ENCODE measurements at regions of chr16 and their contacts with region 1.

Region 1: DNA sequence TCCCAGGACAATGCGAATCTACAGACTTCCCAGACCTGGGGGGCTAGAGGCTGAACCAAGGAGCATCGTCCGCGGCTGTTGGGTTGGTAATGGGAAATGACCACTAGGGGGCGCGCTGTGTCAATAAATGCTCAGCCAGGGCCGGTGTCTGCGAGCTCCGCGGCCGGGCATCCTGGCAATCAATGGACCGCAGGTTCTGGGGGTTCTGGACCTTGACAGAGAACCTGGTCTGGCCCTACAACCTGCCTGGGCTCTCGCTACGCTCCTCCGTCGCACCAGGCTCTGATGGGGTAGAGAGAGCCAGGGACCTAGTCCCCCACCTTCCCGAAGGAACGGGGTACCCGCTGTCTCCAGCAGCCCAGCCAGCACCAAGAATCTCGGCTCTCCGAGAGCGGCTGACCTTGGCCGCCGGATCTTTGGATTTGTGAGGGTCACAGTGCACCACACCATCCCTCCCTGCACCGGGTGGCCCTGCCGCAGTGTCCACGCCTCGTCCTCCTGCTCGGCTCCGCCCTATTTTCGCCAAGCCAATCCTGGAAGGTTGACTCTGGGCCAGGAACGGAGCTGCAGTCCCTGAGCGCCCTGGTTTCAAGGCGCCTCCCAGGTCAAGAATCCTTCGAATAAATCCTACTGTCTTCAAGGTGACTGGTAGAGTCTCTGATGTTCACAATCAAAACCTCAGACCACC is 20.4 kb upstream of the BEAN1 start:
- ATAC-seq: peak; percentile 66 to 95 (median 92)
- H3K4me3 ChIP-seq: peak overlapping the region; percentile 41 to 77 (median 70)
- H3K27ac ChIP-seq: peak overlapping the region in 1 of 2 donors; percentile 26
- H3K4me1 ChIP-seq: peaks cover 0 to 6% of the 10 kb centered on the region in 2 donors

Region 2: DNA sequence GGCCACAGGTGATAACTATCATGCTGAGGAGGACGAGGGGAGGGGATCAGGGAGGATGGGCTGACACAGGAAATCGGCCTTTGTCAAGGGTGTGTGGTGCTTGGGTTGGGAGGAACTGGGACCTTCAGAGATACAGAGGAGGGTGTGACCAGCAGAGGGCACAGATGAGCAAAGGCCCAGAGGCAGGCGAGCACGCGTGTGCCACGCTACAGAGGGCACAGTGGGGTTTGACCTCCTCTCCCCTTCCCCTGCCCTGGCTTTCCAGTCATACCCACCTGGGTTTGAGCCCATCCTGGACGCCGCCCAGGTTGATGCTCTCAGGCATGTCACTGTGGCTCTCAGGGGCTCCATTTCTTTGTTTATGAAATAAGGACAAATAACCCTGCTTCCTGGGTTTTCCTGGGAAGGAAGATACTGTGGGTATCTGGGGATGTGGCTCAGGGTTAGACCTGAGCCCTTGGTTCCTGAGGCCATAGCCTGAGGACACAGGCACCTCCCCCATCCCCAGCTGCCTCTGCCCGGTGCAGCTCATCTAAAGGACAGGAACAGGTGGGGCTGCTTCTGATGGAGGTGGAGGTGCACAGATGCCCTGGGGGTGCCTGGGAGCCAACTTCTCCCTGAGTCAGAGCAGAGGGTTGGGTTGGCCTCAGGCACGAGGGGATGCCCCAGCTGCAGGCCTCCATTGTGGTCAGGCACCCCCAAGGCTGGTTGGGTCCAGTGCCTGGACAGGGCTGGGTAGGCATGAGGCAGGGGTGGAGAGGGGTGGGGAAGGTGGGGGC is 72.2 kb after region 1 on chr16:
- in situ Hi-C with region 1: loop called in 1 of 9 experiments (anchors 10 kb)
- ATAC-seq: peak in 4 of 8 experiments; percentile 19 to 88 (median 80)
- H3K4me3 ChIP-seq: no peak overlapping the region
- H3K27ac ChIP-seq: no peak overlapping the region
- H3K4me1 ChIP-seq: no peaks in the 10 kb centered on the region

Region 3: DNA sequence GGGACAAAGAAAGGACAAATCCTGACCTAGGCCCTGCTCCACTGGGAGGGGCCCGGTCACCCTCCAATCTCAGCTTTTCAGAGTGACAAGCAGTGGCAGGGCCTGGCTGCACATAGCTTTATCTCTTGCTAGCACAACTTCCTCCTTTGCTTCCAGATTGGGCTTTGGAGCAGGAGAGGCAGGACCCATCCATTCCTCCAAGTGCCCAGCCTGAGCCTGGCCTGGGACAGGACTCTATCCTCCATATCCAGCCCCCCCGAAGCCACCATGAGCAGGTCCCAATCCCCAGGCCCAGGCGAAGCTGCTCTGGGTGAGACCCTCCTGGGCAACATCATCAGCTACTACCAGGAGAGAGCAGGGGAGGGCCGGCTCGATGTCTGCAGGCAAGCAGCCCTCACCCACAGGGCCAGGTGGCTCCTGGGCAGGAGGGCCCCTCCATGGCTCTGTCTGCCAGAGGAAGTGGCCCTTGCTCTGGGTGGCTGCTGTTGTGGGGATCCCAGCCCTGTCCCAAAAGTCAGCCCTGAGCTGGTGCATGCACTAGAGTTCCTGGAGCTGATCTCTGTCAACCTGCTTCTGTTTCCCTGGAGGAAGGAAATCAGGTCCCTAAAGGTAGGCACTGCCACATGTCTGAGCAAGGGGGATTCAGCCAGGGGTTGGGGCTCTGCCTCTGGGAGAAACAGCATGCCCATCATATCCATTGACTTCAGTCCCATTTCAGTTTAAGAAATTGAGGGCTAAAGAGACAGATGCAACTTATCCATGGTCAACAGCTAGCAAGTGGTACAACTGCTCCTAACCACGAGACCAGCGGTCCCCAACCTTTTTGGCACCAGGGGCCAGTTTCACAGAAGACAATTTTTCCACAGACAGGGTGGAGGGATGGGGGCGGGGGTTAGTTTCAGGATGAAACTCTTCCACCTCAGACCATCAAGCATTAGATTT is 84.4 kb after region 1 on chr16:
- in situ Hi-C with region 1: loop called in 1 of 9 experiments (anchors 10 kb)
- ATAC-seq: no peak
- H3K4me3 ChIP-seq: no peak overlapping the region
- H3K27ac ChIP-seq: no peak overlapping the region
- H3K4me1 ChIP-seq: peaks cover 0 to 4% of the 10 kb centered on the region in 2 donors

Region 4: GRCh38 chr16:66552286-66553177 is 145.9 kb after region 1 on chr16 and contains the start of gene CKLF:
- in situ Hi-C with region 1: loop called in 1 of 9 experiments (anchors 25 kb)
- ATAC-seq: peak; percentile 53 to 82 (median 76)
- H3K4me3 ChIP-seq: peak within 1 kb of the TSS; percentile 43 to 52 (median 49)
- H3K27ac ChIP-seq: peak within 1 kb of the TSS; percentile 79 to 84
- H3K4me1 ChIP-seq: peaks cover 22 to 24% of the 10 kb centered on the region in 2 donors
- total RNA-seq, gene CKLF: 33.8 to 69.7 (median 54.0) TPM

Region 5: GRCh38 chr16:66588981-66589713 is 182.5 kb after region 1 on chr16:
- in situ Hi-C with region 1: loop called in 2 of 9 experiments (anchors 25 kb)
- ATAC-seq: peak in 3 of 8 experiments; percentile 62 to 83 (median 68)
- H3K4me3 ChIP-seq: no peak overlapping the region
- H3K27ac ChIP-seq: no peak overlapping the region
- H3K4me1 ChIP-seq: no peaks in the 10 kb centered on the region

Region 6: DNA sequence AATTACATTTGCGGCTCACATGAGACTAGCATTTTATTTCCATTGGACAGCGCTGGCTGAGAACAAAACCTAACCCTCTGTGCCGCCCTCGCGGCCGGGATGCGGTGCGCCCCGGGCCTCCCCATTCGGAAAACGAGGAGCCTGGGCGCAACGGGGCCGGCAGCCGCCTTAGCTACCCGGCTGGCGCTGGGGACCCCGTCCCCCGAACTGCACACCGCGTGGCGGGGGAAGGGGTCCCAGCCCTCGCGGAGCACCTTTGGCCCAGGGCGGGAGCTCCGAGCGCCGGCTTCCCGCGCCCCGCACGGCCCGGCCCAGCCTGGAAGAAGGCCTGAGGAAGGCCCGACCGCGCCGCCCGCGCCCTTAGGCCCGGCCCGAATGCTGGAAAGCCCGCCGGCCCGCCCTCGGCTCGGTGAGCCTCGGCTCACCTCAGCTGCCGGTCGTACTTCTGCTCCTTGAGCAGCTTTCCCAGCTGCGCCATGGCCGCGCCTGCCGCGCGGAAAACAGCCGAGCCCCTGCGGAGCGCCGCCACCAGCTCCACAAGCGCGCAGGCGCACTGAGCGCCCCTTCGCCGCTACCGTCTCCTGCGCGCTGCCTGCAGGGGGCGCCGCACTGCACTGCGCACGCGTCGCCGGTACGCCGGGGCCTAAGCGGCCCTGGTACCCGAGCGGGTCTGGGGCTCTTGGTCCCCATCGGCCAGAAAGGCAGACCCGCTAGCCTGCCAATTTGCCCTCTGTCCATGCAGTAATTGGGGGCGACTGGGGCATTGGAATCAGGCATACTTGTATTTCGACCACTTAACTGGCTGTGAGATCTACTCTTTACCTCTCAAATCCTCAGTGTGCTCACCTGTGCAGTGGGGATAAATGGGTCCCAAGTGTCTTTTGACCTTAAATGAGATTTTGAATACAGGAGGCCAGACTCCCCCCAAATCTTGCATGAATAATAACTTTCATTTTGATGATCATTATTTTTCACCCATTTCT is 424.0 kb after region 1 on chr16 and contains the start of gene NAE1:
- in situ Hi-C with region 1: no loop called
- ATAC-seq: peak; percentile 92 to 98 (median 96)
- H3K4me3 ChIP-seq: peak within 1 kb of the TSS; percentile 71 to 96 (median 82)
- H3K27ac ChIP-seq: peak within 1 kb of the TSS; percentile 84 to 94
- H3K4me1 ChIP-seq: peaks cover 8 to 12% of the 10 kb centered on the region in 2 donors
- total RNA-seq, gene NAE1: 46.1 to 82.6 (median 51.5) TPM

Region 7: GRCh38 chr16:66859397-66860068 is 452.9 kb after region 1 on chr16:
- in situ Hi-C with region 1: loop called in 6 of 9 experiments (anchors 10 to 25 kb)
- ATAC-seq: no peak
- H3K4me3 ChIP-seq: no peak overlapping the region
- H3K27ac ChIP-seq: no peak overlapping the region
- H3K4me1 ChIP-seq: no peaks in the 10 kb centered on the region

Region 8: DNA sequence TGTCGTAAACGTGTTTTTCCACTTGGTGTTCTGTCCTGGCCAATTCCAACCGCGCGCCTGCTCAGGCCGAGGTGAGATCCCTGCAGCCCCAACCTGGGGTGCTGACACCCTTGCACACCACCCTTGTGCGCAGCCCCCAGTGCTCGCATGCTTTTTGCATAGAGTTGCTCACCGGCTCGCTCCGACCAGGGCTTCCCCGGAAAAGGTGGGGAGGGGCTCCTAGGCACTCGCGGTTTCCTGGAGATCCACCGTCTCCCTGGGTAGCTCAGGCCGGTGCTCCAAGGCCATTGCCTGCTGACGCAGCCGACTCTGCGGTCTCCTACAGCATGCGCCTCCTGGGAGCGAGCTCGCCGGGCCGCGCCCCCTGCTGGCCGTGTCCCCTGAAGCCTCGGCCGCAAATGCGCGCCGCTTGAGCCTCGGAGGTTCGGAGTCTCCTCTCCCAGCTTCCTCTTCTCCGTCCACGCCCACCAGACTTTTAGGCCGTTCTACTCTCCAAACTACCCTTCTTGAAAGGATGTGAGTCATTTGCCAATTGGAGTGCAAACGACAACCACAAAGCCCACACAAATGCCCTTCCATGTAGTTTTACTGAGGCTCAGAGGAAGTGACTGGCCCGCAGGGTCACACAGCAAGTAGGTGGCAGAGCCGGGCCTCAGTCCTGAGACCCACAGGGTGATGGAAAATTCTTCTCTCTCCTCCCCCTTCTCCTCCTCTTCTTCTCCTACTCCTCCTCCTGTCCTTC is 466.4 kb after region 1 on chr16:
- in situ Hi-C with region 1: loop called in 6 of 9 experiments (anchors 10 to 25 kb)
- ATAC-seq: peak; percentile 98 to 99 (median 98)
- H3K4me3 ChIP-seq: peak overlapping the region; percentile 8 to 25 (median 17)
- H3K27ac ChIP-seq: no peak overlapping the region
- H3K4me1 ChIP-seq: peaks cover 0 to 4% of the 10 kb centered on the region in 2 donors